Ascending aorta (tissue), 2 donors: ENCODE measurements at regions of chr2 and their contacts with region 1.

Region 1: DNA sequence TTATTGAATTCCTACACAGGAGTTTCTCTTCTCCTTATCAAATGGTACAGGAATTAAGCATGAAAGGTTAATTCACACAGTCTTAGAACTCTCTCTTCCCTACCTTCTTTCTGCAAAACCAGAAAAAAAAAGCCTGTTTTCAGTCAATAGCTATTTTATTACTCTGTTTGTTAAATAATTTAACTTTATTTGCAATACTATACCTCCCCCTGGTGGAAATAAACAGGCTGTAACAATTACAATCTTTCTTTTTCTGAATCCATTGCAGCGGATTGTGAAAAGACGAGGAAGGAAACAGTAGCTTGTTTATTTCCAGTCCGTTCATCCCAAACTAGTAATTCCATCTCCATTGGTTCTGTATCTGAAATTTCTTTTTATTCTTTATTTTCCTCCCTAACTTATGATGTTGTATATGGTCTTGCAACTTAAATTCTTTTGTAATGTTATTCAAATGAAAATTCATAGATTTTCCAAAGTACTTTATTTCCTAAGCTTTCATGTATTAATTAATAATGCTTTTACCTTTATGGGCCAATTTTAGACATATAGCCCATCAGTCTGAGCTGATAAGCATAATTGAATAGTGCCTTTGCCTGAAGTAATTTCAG is 165.2 kb downstream of the SH3BP4 start:
- DNase-seq: no peak
- H3K4me3 ChIP-seq: no peak overlapping the region
- H3K27ac ChIP-seq: no peak overlapping the region
- H3K4me1 ChIP-seq: no peaks in the 10 kb centered on the region
- H3K27me3 ChIP-seq: no peaks in the 10 kb centered on the region
- CTCF ChIP-seq: peak in 2 of 3 experiments; percentile 50 to 64

Region 2: GRCh38 chr2:234550511-234551107 is 566.4 kb before region 1 on chr2:
- intact Hi-C with region 1: loop called (anchors 1 kb)
- DNase-seq: peak in 1 of 2 donors; percentile 71
- H3K4me3 ChIP-seq: no peak overlapping the region
- H3K27ac ChIP-seq: no peak overlapping the region
- H3K4me1 ChIP-seq: no peaks in the 10 kb centered on the region
- H3K27me3 ChIP-seq: no peaks in the 10 kb centered on the region
- CTCF ChIP-seq: peak; percentile 83 to 98 (median 93)